ENCODE measurements at regions of chr6 and their contacts with region 1.

Region 1: GRCh38 chr6:31094389-31094881 is 17.9 kb downstream of the C6orf15 start:
- DNase-seq: peak in 9 of 10 donors; percentile 19 to 78 (median 46)
- ATAC-seq: peak; percentile 88 to 89
- H3K4me3 Mint-ChIP-seq: peak overlapping the region; percentile 57 to 83 (median 73)
- H3K27ac Mint-ChIP-seq: peak overlapping the region; percentile 90 to 99 (median 93)
- H3K4me1 Mint-ChIP-seq: peaks cover 20 to 44% (median 42%) of the 10 kb centered on the region in 4 donors
- H3K27me3 Mint-ChIP-seq: no peaks in the 10 kb centered on the region

Region 2: DNA sequence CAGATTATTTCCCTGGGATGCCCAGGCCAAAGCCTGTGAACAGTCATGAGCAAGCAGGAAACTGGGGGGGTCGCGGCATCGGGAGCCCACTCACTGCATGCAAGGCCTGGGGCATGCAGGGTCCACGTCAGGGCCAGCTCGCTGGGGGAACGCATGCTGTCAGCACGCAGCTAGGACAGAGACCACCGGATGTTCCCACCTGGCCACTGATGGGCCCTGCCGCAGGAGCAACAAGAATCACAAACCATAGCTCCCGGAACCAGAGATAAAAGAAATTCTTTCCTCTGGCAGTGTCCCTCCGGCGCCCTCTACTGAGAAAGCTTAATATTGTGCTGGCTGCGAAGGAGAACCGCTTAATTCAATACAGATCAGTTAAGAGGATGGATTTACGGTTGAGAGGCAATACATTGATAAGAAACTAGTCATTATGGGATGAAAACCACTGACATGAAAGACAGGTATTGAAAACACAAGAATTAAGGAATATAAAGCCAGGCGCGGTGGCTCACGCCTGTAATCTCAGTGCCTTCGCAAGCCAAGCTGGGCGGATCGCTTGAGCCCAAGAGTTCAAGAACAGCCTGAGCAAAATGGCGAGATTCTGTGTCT is 14.7 kb before region 1 on chr6:
- POLR2A ChIA-PET with region 1: interaction called, 16 read pairs
- DNase-seq: peak; percentile 43 to 85 (median 70)
- ATAC-seq: peak; percentile 95 to 98
- H3K4me3 Mint-ChIP-seq: peak overlapping the region; percentile 48 to 86 (median 66)
- H3K27ac Mint-ChIP-seq: peak overlapping the region in 8 of 10 donors; percentile 13 to 85 (median 64)
- H3K4me1 Mint-ChIP-seq: peaks cover 0 to 10% (median 8%) of the 10 kb centered on the region in 4 donors
- H3K27me3 Mint-ChIP-seq: peaks cover 0 to 2% (median 0%) of the 10 kb centered on the region in 5 donors

Measured in naive thymus-derived CD8-positive, alpha-beta T cell (primary cell).